AG04449 (cell line): ENCODE measurements at regions of chrX and their contacts with region 1.

Region 1: GRCh38 chrX:17580539-17581152 is 156.6 kb upstream of the SCML1 start:
- DNase-seq: peak; percentile 69
- H3K4me3 ChIP-seq: no peak overlapping the region
- CTCF ChIP-seq: no peak

Region 2: GRCh38 chrX:17336377-17336776 is 244.3 kb before region 1 on chrX:
- CTCF ChIA-PET with region 1: no interaction called
- POLR2A ChIA-PET with region 1: no interaction called
- DNase-seq: no peak
- H3K4me3 ChIP-seq: no peak overlapping the region
- CTCF ChIP-seq: no peak

Region 3: GRCh38 chrX:17590892-17591740 is 10.5 kb after region 1 on chrX:
- CTCF ChIA-PET with region 1: interaction called, 11 read pairs
- POLR2A ChIA-PET with region 1: no interaction called
- DNase-seq: no peak
- H3K4me3 ChIP-seq: peak overlapping the region; percentile 40
- CTCF ChIP-seq: peak; percentile 73